ENCODE measurements at regions of chr2 and their contacts with region 1.

Region 1: GRCh38 chr2:173286153-173286809 is 68.4 kb upstream of the CDCA7 start:
- DNase-seq: peak; percentile 20
- ATAC-seq: peak; percentile 86
- H3K4me3 Mint-ChIP-seq: no peak overlapping the region
- H3K27ac Mint-ChIP-seq: peak overlapping the region; percentile 60
- H3K4me1 Mint-ChIP-seq: peaks cover 16% of the 10 kb centered on the region
- H3K27me3 Mint-ChIP-seq: peaks cover 3% of the 10 kb centered on the region

Region 2: DNA sequence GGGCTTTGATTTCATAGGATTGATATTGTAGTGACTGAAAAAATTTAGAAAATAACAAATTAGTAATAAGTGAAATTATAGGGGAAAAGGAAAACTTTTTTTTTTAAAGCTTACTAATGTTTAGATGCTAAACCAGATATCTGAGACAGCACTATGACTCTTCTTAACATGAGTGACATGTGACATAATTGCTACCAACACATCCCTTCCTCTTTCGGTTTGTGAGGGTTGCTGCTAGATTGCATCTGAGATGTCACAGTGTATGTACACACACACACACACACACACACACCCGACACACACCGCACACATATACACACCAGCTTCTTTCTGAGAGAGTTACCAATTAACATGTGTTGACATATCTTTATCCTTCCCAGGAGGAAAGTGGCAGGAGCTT is 532.7 kb before region 1 on chr2:
- CTCF ChIA-PET with region 1: no interaction called
- POLR2A ChIA-PET with region 1: no interaction called
- intact Hi-C with region 1: no loop called
- DNase-seq: no peak
- ATAC-seq: no peak
- H3K4me3 Mint-ChIP-seq: no peak overlapping the region
- H3K27ac Mint-ChIP-seq: no peak overlapping the region
- H3K4me1 Mint-ChIP-seq: no peaks in the 10 kb centered on the region
- H3K27me3 Mint-ChIP-seq: peaks cover 8% of the 10 kb centered on the region

Region 3: GRCh38 chr2:172931918-172932520 is 354.3 kb before region 1 on chr2:
- CTCF ChIA-PET with region 1: no interaction called
- POLR2A ChIA-PET with region 1: no interaction called
- intact Hi-C with region 1: no loop called
- DNase-seq: peak; percentile 82
- ATAC-seq: peak; percentile 55
- H3K4me3 Mint-ChIP-seq: no peak overlapping the region
- H3K27ac Mint-ChIP-seq: no peak overlapping the region
- H3K4me1 Mint-ChIP-seq: peaks cover 5% of the 10 kb centered on the region
- H3K27me3 Mint-ChIP-seq: peaks cover 6% of the 10 kb centered on the region

Region 4: DNA sequence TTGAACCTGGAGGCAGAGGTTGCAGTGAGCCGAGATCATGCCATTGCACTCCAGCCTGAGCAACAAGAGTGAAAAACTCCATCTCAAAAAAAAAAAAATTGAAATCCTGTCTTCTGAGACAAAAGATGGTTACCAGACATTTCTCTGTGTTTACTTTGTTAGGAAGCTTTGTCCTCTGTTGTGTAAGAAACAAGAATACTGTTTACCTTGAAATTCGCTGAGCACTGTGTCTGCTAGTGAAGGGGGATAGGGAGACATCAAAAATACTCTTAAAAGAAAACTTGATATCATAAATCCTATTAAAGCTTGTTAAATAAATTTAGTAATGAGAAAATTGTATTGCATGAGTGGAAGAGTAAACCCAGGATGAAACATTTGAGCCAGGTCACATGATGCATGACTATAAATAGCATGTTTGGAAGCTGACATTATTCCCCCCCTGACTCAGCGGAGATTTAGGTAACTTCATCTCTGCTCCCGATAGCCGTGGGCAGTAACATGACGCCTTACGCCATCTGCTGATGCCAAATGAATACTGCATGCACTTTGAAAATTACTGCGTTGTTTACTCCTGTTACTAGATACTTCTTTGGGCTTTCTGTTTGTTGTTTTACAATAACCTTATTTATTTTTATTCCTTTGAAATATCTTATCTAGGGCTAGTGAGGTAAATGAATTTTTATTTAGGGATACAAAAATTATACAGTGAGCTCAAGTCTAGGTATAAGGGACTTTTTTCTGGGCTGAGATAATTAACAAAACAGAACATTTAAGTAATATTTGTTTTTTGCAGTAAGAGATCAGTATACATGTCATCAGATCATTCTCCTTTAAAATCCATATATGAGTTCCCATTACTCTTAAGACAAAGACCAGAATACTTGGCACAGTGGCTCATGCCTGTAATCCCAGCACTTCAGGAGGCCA is 75.7 kb before region 1 on chr2:
- CTCF ChIA-PET with region 1: no interaction called
- POLR2A ChIA-PET with region 1: no interaction called
- intact Hi-C with region 1: no loop called
- DNase-seq: peak; percentile 70
- ATAC-seq: peak; percentile 65
- H3K4me3 Mint-ChIP-seq: no peak overlapping the region
- H3K27ac Mint-ChIP-seq: no peak overlapping the region
- H3K4me1 Mint-ChIP-seq: no peaks in the 10 kb centered on the region
- H3K27me3 Mint-ChIP-seq: peaks cover 9% of the 10 kb centered on the region

Region 5: DNA sequence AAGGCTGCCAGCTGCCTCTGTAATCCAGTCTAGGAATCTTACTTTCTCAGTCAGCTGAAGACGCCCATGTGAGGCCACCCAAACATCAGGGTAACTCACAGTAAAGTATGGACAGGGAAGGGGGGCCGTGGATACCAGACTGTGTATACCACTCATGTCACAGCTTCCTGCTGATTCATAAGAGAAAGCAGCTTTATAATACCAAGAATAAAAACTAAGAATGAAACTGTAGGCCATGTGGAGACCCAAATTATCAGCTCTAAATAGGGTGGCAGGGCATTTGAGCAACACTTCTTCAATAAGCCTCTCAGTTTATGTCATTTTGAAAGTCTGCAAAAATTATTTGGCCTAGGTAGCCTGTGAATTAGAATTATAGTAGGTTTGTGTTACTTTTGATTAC is 46.6 kb before region 1 on chr2:
- CTCF ChIA-PET with region 1: no interaction called
- POLR2A ChIA-PET with region 1: no interaction called
- intact Hi-C with region 1: loop called in 1 of 2 experiments (anchors 1 kb)
- DNase-seq: peak; percentile 49
- ATAC-seq: peak; percentile 96
- H3K4me3 Mint-ChIP-seq: no peak overlapping the region
- H3K27ac Mint-ChIP-seq: no peak overlapping the region
- H3K4me1 Mint-ChIP-seq: peaks cover 4% of the 10 kb centered on the region
- H3K27me3 Mint-ChIP-seq: no peaks in the 10 kb centered on the region

Region 6: GRCh38 chr2:173354601-173355131 is 68.4 kb after region 1 on chr2 and contains the start of gene CDCA7:
- CTCF ChIA-PET with region 1: no interaction called
- POLR2A ChIA-PET with region 1: interaction called, 3 read pairs
- intact Hi-C with region 1: loop called (anchors 1 to 5 kb)
- DNase-seq: peak; percentile 86
- ATAC-seq: peak; percentile 68
- H3K4me3 Mint-ChIP-seq: peak within 1 kb of the TSS; percentile 87
- H3K27ac Mint-ChIP-seq: peak within 1 kb of the TSS; percentile 97
- H3K4me1 Mint-ChIP-seq: peaks cover 37% of the 10 kb centered on the region
- H3K27me3 Mint-ChIP-seq: peaks cover 46% of the 10 kb centered on the region
- total RNA-seq, gene CDCA7: 80.4 to 88.2 TPM

Measured in activated CD4-positive, alpha-beta T cell treated with anti-CD3 and anti-CD28 coated beads for 36 hours (primary cell).